Activated naive CD4-positive, alpha-beta T cell treated with anti-CD3 and anti-CD28 coated beads for 36 hours (primary cell): ENCODE measurements at regions of chrX and their contacts with region 1.

Region 1: GRCh38 chrX:19343535-19344408 is at the start of gene PDHA1:
- DNase-seq: peak; percentile 94
- H3K4me3 Mint-ChIP-seq: peak within 1 kb of the TSS; percentile 83
- H3K27ac Mint-ChIP-seq: peak within 1 kb of the TSS; percentile 78
- H3K4me1 Mint-ChIP-seq: peaks cover 21% of the 10 kb centered on the region
- H3K27me3 Mint-ChIP-seq: no peaks in the 10 kb centered on the region
- total RNA-seq, gene PDHA1: 233 to 242 TPM

Region 2: GRCh38 chrX:18984381-18985185 is 359.2 kb before region 1 on chrX:
- CTCF ChIA-PET with region 1: no interaction called
- intact Hi-C with region 1: loop called (anchors 1 kb)
- DNase-seq: peak; percentile 85
- H3K4me3 Mint-ChIP-seq: peak overlapping the region; percentile 88
- H3K27ac Mint-ChIP-seq: peak overlapping the region; percentile 88
- H3K4me1 Mint-ChIP-seq: peaks cover 11% of the 10 kb centered on the region
- H3K27me3 Mint-ChIP-seq: no peaks in the 10 kb centered on the region